ENCODE measurements at regions of chr9 and their contacts with region 1.

Region 1: DNA sequence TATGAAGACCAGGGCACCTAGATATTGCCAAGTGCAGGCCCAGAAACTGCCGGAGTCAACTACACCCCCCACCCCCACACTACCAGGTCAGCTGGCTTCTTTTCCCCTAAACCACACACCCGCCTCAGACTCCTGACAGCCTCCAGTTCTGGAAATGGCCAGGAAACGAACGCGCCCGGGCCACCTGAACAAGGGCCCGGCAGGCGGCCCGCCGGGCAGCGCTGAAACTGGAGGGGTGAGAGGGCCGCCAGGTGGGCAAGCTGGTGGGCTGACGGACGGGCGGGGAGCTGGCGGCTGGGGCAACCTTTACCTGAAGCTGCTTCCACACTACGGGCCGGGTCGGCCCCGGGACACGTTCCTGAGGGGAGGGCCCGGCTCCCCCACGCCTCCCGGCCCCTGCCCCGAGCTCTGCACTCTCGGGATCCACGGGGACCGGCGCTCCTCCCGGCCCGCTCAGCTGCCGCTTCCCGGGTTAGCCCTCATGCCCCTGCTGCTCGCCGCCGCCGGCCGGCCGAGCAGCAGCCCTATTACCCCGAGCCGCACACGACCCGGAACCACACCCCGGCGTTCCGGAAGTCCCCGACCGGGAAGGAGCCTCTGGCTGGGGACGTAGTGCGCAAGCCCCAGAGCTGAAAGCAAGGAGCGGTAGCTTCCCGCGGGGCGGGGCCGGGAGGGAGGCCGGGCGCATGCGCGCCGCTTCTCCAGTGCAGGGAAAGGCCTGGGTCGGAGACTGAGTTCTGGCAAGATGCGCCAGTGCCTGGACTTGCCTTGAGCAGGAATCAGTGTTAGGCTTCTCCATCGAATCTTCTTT is at the start of gene MAPKAP1:
- DNase-seq: peak; percentile 92 to 94
- ATAC-seq: peak; percentile 98 to 99
- H3K4me3 ChIP-seq: peak within 1 kb of the TSS; percentile 89 to 99 (median 97)
- H3K27ac ChIP-seq: peak within 1 kb of the TSS; percentile 75 to 89 (median 84)
- H3K4me1 ChIP-seq: peaks cover 23 to 29% of the 10 kb centered on the region in 2 donors
- H3K27me3 ChIP-seq: no peaks in the 10 kb centered on the region
- CTCF ChIP-seq: no peak
- POLR2A ChIP-seq: peak; percentile 68 to 72
- total RNA-seq, gene MAPKAP1: 58.2 to 123 (median 104) TPM

Region 2: DNA sequence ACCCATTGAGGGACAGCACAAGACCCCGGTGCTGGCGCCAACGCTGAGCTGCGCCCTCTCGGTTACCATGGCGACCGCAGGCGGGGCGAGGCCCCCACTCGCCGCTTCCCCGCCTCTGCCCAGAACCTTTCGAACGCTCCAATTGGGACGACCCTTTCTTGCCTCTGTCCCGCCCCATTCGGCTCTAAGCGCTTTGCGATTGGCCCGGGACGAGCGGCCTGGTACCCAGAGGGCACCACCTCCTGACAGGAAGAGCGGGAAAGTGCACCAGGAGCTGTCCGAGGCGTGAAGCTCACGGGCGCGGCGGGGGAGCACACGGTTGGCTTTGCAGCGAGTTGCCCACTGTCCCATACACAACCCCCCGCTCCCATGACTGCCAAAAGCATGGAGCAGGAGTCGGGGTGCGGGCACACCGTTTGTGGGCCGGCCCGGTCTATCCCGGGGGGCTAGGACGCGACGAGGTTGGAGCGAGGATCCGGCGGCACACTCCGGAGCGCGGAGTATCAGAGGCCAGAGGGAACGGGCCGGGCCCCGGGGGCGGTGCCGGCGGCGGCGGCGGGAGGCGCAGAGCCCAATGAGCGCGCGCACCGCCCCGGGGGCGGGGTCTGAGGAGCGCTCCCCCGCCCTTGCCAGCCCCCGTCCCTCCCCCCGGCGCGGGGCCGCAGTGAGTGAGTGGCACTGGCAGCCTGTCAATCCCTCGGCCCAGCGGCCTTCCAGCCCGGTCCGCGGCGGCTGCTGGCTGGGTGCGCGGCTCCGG is 39.3 kb after region 1 on chr9:
- in situ Hi-C with region 1: no loop called
- intact Hi-C with region 1: loop called (anchors 1 kb)
- DNase-seq: peak; percentile 87 to 89
- ATAC-seq: peak; percentile 84 to 89
- H3K4me3 ChIP-seq: peak overlapping the region; percentile 63 to 85 (median 77)
- H3K27ac ChIP-seq: peak overlapping the region; percentile 78 to 81 (median 80)
- H3K4me1 ChIP-seq: peaks cover 3 to 15% of the 10 kb centered on the region in 2 donors
- H3K27me3 ChIP-seq: peaks cover 19 to 31% (median 29%) of the 10 kb centered on the region in 3 donors
- CTCF ChIP-seq: no peak
- POLR2A ChIP-seq: peak; percentile 67 to 72

Region 3: GRCh38 chr9:125789196-125789595 is 82.3 kb after region 1 on chr9:
- in situ Hi-C with region 1: no loop called
- intact Hi-C with region 1: no loop called
- DNase-seq: no peak
- ATAC-seq: no peak
- H3K4me3 ChIP-seq: no peak overlapping the region
- H3K27ac ChIP-seq: no peak overlapping the region
- H3K4me1 ChIP-seq: no peaks in the 10 kb centered on the region
- H3K27me3 ChIP-seq: no peaks in the 10 kb centered on the region
- CTCF ChIP-seq: no peak
- POLR2A ChIP-seq: no peak

Measured in gastrocnemius medialis (tissue), 4 donors.